Activated CD4-positive, alpha-beta T cell treated with anti-CD3 and anti-CD28 coated beads, Interleukin-2, amount 10 ng/mL, durations not matched to agents 24 days and 14 days (primary cell): ENCODE measurements at regions of chr1 and their contacts with region 1.

Region 1: DNA sequence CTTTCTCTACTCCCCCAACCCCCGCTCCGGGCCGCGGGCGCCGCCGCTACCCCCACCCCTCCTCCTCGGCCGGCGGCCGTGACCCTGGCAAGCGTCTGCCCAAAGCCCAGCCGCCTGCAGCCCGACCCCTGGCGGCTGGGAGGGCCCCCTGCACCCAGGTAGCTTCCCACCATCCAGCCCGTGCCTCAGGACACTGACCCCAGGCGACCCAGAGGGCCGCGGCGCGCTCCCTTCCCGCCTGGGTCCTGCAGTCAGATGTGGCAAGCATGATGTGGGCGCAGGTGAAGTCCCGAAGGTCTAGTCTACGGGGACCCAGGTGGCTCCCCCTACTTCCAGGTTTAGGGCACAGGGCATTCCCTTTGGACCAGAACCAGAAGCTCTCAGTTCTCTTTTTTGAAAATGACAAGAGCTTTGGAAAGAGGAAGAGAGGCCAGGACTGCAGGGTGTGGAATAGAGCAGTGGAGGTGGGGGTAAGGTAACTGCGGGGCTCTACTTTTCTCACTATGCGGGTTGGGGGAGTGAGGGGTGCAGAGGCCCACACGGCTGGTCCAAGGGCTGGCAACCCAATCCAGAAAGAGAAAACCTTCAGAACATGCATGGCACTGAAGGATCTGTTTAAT is at the start of gene DENND4B:
- DNase-seq: peak; percentile 93
- H3K4me3 Mint-ChIP-seq: peak within 1 kb of the TSS; percentile 96
- H3K27ac Mint-ChIP-seq: peak within 1 kb of the TSS; percentile 96
- H3K4me1 Mint-ChIP-seq: peaks cover 35% of the 10 kb centered on the region
- H3K27me3 Mint-ChIP-seq: no peaks in the 10 kb centered on the region
- total RNA-seq, gene DENND4B: 128 and 130 TPM in 2 replicates

Region 2: DNA sequence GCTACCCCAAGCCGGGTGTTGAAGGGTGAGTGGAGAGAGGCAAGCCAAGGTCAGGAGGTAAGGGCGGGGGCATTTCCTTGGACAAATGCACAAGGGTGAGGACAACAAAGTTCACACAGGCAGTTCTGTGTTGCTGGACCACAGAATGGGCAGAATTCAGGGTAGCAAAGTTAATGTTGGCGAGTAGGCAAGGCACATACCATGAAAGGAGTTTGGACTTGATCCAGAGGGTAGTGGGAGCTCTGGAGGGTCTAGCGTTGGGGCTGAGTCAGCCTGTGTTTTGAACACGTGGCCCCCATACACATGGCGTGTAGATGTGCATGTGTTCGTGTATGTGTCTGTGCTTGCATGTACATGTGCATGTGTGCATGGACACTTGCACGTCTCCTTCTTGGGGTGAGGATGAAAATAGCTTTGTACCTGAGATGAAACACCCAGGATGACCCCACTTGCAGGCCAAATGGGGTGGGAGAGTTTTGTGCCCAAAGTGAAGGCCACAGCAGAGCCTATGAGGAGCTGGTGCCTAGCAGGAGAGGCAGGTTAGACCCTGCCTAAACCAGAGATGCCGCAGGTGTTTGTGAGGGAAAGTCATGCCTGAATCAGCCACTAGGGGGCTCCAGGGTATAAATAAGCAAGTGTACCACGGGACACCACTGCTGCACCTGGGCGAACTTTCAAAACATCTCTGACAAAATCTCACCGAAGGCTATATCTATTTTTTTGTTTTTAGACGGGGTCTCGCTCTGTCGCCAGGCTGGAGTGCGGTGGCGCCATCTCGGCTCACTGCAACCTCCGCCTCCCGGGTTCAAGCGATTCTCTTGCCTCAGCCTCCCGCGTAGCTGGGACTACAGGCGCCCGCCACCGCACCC is 149.7 kb before region 1 on chr1:
- intact Hi-C with region 1: loop called (anchors 1 kb)
- DNase-seq: peak; percentile 94
- H3K4me3 Mint-ChIP-seq: no peak overlapping the region
- H3K27ac Mint-ChIP-seq: no peak overlapping the region
- H3K4me1 Mint-ChIP-seq: peaks cover 12% of the 10 kb centered on the region
- H3K27me3 Mint-ChIP-seq: no peaks in the 10 kb centered on the region

Region 3: DNA sequence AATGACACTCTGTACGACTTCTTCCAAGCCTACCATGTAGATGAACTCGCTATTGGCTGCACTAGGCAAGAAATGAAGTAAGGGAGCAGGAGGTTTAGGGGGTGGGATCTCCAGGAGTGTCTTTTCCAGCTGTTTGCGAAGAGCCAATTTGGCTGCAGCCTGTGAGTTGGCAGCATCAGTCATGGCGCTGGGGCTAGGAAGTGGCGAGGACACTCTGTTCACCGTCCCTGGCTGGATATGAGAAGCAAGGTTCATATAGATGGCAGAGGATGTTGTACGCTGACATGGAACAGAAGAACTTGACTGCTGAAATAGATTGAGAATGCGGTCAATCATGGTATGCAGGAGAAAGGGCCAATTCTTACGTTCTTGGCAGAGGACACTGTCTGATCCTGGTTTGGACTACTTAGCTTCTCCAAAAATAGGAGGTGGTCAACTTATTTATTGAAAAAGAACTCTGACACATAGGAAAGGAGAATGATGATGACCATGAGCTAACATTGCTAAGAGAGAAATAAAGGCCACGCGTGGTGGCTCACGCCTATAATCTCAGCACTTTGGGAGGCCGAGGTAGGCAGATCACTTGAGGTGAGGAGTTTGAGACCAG is 130.3 kb before region 1 on chr1:
- intact Hi-C with region 1: loop called (anchors 1 kb)
- DNase-seq: no peak
- H3K4me3 Mint-ChIP-seq: no peak overlapping the region
- H3K27ac Mint-ChIP-seq: no peak overlapping the region
- H3K4me1 Mint-ChIP-seq: peaks cover 2% of the 10 kb centered on the region
- H3K27me3 Mint-ChIP-seq: no peaks in the 10 kb centered on the region

Region 4: DNA sequence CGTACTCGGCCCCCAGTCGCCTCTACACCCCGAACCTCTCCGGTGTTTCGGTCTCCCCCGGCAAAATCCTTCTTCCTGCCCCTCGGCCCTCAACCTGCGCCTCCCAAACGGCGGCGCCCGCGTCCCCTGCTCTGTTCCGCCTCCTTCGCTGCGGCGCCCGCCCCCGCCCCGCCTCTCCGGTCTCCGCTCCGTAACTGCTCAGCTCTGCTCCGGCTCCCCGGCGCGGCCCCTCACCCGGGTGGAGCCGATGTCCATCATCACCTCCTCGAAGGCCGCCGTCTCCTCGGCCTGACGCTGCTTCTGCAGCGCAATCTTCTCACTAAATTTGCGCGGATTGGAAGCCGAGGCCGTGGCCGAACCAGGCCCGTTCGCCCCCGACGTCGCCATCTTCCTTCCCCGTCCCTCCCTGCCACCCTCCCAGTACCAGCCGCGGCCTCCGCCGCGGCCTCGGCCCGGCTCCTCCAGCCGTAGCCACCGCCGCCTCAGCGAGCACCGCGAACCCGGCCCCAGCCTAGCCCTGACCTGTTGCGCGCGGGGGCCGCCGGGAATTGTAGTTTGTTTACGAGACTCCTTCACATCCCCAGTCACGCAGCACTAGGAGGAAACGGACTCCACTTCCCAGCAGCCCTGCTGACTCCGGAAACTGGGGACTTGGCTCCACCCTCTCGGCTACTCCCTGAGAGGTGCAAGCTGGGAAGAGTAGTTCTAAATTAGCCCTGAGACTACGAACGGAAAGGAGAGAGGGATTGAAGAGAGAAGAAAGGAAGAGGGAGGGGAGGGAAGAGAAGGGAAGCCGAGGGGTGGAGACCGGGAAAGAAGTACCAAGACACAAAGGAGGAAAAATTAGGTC is 11.6 kb after region 1 on chr1 and contains the start of gene CRTC2:
- intact Hi-C with region 1: loop called (anchors 1 kb)
- DNase-seq: peak; percentile 99
- H3K4me3 Mint-ChIP-seq: peak within 1 kb of the TSS; percentile 88
- H3K27ac Mint-ChIP-seq: peak within 1 kb of the TSS; percentile 94
- H3K4me1 Mint-ChIP-seq: peaks cover 52% of the 10 kb centered on the region
- H3K27me3 Mint-ChIP-seq: no peaks in the 10 kb centered on the region
- total RNA-seq, gene CRTC2: 72.4 and 76.8 TPM in 2 replicates